Left colon (tissue), 2 donors: ENCODE measurements at regions of chr15 and their contacts with region 1.

Region 1: GRCh38 chr15:91694831-91695210 is 158.7 kb upstream of the SLCO3A1 start:
- DNase-seq: peak; percentile 57 to 64
- ATAC-seq: peak; percentile 99

Region 2: GRCh38 chr15:91238644-91239425 is 456.0 kb before region 1 on chr15:
- intact Hi-C with region 1: no loop called
- DNase-seq: no peak
- ATAC-seq: no peak

Region 3: DNA sequence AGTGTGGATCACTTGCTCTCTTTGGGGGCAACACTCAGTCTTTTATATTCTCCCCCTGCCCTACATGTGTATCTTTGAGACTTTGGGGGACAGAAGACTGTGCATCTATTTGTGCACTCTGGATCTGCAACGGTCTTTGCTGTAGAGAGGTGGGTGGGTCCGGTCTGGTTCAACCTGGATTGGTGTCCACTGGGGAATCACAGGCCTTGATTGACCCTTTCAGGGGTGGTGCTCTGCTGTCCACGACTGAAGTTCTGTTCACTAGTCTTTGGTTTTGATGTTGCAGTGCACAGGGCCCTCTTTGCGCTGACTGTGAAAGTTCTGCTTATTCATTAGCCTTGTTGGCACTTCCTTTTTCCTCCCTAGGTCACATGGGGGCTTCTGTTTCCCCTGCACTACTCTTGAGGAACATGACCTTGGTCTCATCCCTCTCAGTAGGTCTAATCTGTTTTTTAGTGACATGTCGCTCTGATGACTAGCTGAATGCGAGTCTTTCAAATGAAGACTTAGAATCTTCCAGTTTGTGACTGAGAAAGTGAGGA is 310.6 kb before region 1 on chr15:
- intact Hi-C with region 1: no loop called
- DNase-seq: no peak
- ATAC-seq: no peak

Region 4: GRCh38 chr15:91849749-91850161 is 154.9 kb after region 1 on chr15:
- intact Hi-C with region 1: loop called in 1 of 2 experiments (anchors 10 kb)
- DNase-seq: no peak
- ATAC-seq: no peak

Region 5: GRCh38 chr15:92082006-92082843 is 387.4 kb after region 1 on chr15:
- intact Hi-C with region 1: loop called in 1 of 2 experiments (anchors 5 kb)
- DNase-seq: peak; percentile 38 to 67
- ATAC-seq: peak; percentile 76